ENCODE measurements at regions of chrX and their contacts with region 1.

Region 1: GRCh38 chrX:24805201-24805600 is 111.5 kb downstream of the POLA1 start:
- DNase-seq: no peak
- H3K4me3 Mint-ChIP-seq: no peak overlapping the region
- H3K27ac Mint-ChIP-seq: no peak overlapping the region
- H3K4me1 Mint-ChIP-seq: no peaks in the 10 kb centered on the region
- H3K27me3 Mint-ChIP-seq: no peaks in the 10 kb centered on the region
- CTCF ChIP-seq: no peak

Region 2: DNA sequence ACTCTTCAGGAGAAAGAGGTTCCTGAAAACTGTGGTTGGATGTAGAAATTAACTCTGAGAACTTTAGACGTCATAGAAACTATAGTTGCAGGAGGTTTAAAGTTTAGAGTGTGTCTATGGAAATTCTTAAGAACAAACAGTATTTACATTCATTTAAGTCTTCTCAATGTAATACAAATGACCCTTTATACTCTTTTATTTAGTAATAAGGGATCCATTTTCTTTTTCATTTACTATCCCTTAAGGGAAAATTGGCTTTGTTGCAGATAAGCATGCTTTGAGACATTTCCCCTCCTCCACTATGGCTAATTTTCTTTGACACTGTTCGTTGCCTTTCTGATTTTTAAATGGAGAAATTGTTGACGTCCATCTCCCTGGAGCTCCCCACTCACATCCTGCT is 15.0 kb before region 1 on chrX:
- CTCF ChIA-PET with region 1: interaction called, 11 read pairs
- intact Hi-C with region 1: no loop called
- DNase-seq: no peak
- H3K4me3 Mint-ChIP-seq: no peak overlapping the region
- H3K27ac Mint-ChIP-seq: no peak overlapping the region
- H3K4me1 Mint-ChIP-seq: no peaks in the 10 kb centered on the region
- H3K27me3 Mint-ChIP-seq: no peaks in the 10 kb centered on the region
- CTCF ChIP-seq: no peak

Region 3: DNA sequence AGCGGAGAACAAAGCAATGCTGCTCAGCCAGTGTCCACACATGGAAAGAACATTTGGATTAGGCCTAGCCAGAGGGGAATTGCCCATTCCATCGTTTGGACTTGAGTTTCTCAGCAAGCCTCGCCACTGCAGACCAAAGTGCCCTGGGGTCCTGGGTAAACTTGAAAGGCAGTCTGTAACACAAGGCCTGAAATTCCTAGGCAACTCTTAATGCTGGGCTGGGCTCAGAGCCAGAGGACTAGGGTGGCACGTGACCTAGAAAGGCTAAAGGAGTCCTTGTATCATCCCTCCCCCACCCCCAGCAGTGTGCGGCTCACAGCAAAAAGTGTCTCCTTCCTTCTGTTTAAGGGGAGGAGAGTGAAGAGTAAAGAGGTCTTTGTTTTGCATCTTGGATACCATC is 420.9 kb after region 1 on chrX:
- CTCF ChIA-PET with region 1: no interaction called
- intact Hi-C with region 1: no loop called
- DNase-seq: no peak
- H3K4me3 Mint-ChIP-seq: no peak overlapping the region
- H3K27ac Mint-ChIP-seq: no peak overlapping the region
- H3K4me1 Mint-ChIP-seq: no peaks in the 10 kb centered on the region
- H3K27me3 Mint-ChIP-seq: peaks cover under 1% of the 10 kb centered on the region
- CTCF ChIP-seq: no peak